Gastrocnemius medialis (tissue), 4 donors: ENCODE measurements at regions of chr2 and their contacts with region 1.

Region 1: GRCh38 chr2:6909431-6910385 is 7.5 kb upstream of the RNF144A start:
- DNase-seq: no peak
- ATAC-seq: no peak
- H3K4me3 ChIP-seq: no peak overlapping the region
- H3K27ac ChIP-seq: no peak overlapping the region
- H3K4me1 ChIP-seq: no peaks in the 10 kb centered on the region
- H3K27me3 ChIP-seq: no peaks in the 10 kb centered on the region
- CTCF ChIP-seq: no peak
- POLR2A ChIP-seq: no peak

Region 2: GRCh38 chr2:6865346-6866274 is 44.1 kb before region 1 on chr2 and contains the start of gene CMPK2:
- in situ Hi-C with region 1: no loop called
- intact Hi-C with region 1: no loop called
- DNase-seq: peak in 1 of 2 donors; percentile 40
- ATAC-seq: peak; percentile 66 to 76
- H3K4me3 ChIP-seq: peak within 1 kb of the TSS; percentile 64 to 98 (median 74)
- H3K27ac ChIP-seq: peak within 1 kb of the TSS; percentile 47 to 80 (median 70)
- H3K4me1 ChIP-seq: peaks cover 6 to 12% of the 10 kb centered on the region in 2 donors
- H3K27me3 ChIP-seq: no peaks in the 10 kb centered on the region
- CTCF ChIP-seq: peak in 1 of 5 experiments; percentile 38
- POLR2A ChIP-seq: peak; percentile 26 to 51
- total RNA-seq, gene CMPK2: 2.1 to 12.2 (median 3.3) TPM

Region 3: GRCh38 chr2:7031547-7032245 is 122.0 kb after region 1 on chr2:
- in situ Hi-C with region 1: loop called in 1 of 4 experiments (anchors 5 kb)
- intact Hi-C with region 1: no loop called
- DNase-seq: peak; percentile 58 to 72
- ATAC-seq: peak; percentile 69 to 73
- H3K4me3 ChIP-seq: no peak overlapping the region
- H3K27ac ChIP-seq: peak overlapping the region; percentile 42 to 72 (median 52)
- H3K4me1 ChIP-seq: peaks cover 5 to 8% of the 10 kb centered on the region in 2 donors
- H3K27me3 ChIP-seq: no peaks in the 10 kb centered on the region
- CTCF ChIP-seq: no peak
- POLR2A ChIP-seq: no peak